ENCODE measurements at regions of chr6 and their contacts with region 1.

Region 1: GRCh38 chr6:68876792-68877493 is 241.9 kb downstream of the ADGRB3 start:
- DNase-seq: no peak
- ATAC-seq: no peak
- H3K4me3 ChIP-seq: no peak overlapping the region
- H3K27ac ChIP-seq: no peak overlapping the region
- H3K4me1 ChIP-seq: no peaks in the 10 kb centered on the region
- H3K27me3 ChIP-seq: no peaks in the 10 kb centered on the region; the same call in 1 of the 2 replicates
- CTCF ChIP-seq: peak; percentile 22; the same call in 1 of the 2 replicates

Region 2: DNA sequence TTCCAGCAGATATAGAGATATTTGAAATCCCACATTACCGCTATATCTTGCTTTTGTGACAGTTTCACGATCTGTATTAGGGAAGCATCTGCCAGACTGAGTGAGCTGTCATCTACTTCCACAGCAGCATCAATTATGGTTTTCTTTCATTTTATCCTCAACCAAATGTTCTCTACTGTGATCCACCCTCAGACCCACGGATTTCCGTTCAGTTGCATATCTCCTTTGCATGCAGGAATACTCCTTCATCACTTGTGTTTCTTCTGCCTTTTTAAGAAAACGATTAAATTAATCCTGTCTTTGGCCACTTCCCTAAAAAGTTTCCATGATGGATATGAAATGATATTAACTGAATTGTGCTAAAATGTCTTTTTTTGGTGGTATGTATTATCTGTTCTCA is 504.0 kb before region 1 on chr6:
- CTCF ChIA-PET with region 1: no interaction called
- POLR2A ChIA-PET with region 1: no interaction called
- in situ Hi-C with region 1: no loop called
- intact Hi-C with region 1: no loop called
- DNase-seq: no peak
- ATAC-seq: no peak
- H3K4me3 ChIP-seq: no peak overlapping the region
- H3K27ac ChIP-seq: no peak overlapping the region
- H3K4me1 ChIP-seq: no peaks in the 10 kb centered on the region
- H3K27me3 ChIP-seq: no peaks in the 10 kb centered on the region
- CTCF ChIP-seq: no peak

Region 3: GRCh38 chr6:68967549-68968300 is 90.8 kb after region 1 on chr6:
- CTCF ChIA-PET with region 1: no interaction called
- POLR2A ChIA-PET with region 1: no interaction called
- in situ Hi-C with region 1: no loop called
- intact Hi-C with region 1: loop called (anchors 5 kb)
- DNase-seq: peak; percentile 52
- ATAC-seq: peak; percentile 60; the same call in 1 of the 2 replicates
- H3K4me3 ChIP-seq: no peak overlapping the region
- H3K27ac ChIP-seq: no peak overlapping the region
- H3K4me1 ChIP-seq: no peaks in the 10 kb centered on the region
- H3K27me3 ChIP-seq: no peaks in the 10 kb centered on the region; the same call in none of the 2 replicates
- CTCF ChIP-seq: peak; percentile 96

Region 4: DNA sequence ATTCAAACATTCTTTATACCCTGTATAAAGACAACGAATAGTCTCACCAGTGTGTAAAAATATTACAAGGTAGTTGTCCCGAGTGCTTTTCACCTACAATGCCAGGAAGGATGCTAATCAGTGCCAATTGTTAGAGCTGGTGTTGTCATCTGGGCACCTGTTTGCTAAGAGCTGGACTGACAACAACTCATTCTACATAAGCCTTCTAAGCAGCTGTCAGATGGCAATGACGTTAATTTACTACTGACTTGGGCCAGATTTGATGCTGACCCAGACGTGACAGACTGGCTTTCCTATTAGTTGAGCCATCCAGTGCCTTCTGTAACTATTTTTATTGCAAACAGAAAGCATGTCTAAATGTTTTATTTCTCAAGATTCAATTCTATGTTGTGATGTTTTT is 113.4 kb after region 1 on chr6:
- CTCF ChIA-PET with region 1: no interaction called
- POLR2A ChIA-PET with region 1: no interaction called
- in situ Hi-C with region 1: no loop called
- intact Hi-C with region 1: no loop called
- DNase-seq: no peak
- ATAC-seq: no peak
- H3K4me3 ChIP-seq: no peak overlapping the region
- H3K27ac ChIP-seq: no peak overlapping the region
- H3K4me1 ChIP-seq: no peaks in the 10 kb centered on the region
- H3K27me3 ChIP-seq: no peaks in the 10 kb centered on the region
- CTCF ChIP-seq: no peak

Region 5: DNA sequence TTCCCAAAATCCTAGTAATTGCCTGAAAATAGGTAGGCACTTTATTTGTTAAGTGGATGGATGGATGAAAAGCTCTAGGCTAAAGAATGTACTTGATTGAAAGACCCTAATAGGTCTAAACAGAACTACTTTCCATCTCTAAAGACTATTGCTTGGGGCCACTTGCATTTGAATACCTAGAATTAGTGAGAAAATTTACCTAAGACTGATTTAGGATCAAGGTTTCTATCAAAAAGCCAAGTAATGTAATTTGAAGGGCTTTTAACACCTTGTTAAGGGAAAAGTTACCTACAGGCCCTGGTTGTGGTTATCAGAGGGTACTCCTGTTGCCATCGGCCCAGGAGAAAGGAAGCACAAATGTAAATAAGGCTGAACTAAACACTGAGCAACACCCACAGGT is 339.2 kb after region 1 on chr6:
- CTCF ChIA-PET with region 1: no interaction called
- POLR2A ChIA-PET with region 1: no interaction called
- in situ Hi-C with region 1: no loop called
- intact Hi-C with region 1: no loop called
- DNase-seq: no peak
- ATAC-seq: no peak
- H3K4me3 ChIP-seq: no peak overlapping the region
- H3K27ac ChIP-seq: no peak overlapping the region
- H3K4me1 ChIP-seq: no peaks in the 10 kb centered on the region
- H3K27me3 ChIP-seq: no peaks in the 10 kb centered on the region
- CTCF ChIP-seq: no peak

Region 6: DNA sequence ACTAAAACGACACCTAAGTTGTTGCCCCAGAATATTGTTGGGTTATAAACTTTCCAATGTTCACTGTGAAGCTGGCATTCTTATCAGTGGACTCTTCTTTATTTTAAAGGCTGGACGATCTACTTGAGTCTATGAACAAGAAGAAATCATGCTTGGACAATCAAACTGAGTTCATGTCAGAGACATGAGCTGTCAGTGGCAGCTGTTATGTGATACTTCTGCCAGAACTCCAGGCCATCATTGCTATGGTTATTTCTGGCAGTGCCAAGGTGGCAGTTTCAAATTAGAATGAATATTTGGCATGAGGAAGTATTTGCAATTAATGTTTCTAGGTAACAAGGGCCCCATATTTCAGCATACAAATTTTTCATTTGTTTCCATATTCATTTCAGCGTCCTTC is 502.6 kb after region 1 on chr6:
- CTCF ChIA-PET with region 1: no interaction called
- POLR2A ChIA-PET with region 1: no interaction called
- in situ Hi-C with region 1: no loop called
- intact Hi-C with region 1: no loop called
- DNase-seq: no peak
- ATAC-seq: no peak
- H3K4me3 ChIP-seq: no peak overlapping the region
- H3K27ac ChIP-seq: no peak overlapping the region
- H3K4me1 ChIP-seq: no peaks in the 10 kb centered on the region
- H3K27me3 ChIP-seq: no peaks in the 10 kb centered on the region
- CTCF ChIP-seq: no peak

Region 7: GRCh38 chr6:69732640-69733039 is 855.7 kb after region 1 on chr6:
- CTCF ChIA-PET with region 1: no interaction called
- POLR2A ChIA-PET with region 1: no interaction called
- in situ Hi-C with region 1: no loop called
- intact Hi-C with region 1: loop called (anchors 5 kb)
- DNase-seq: peak; percentile 13
- ATAC-seq: no peak
- H3K4me3 ChIP-seq: no peak overlapping the region
- H3K27ac ChIP-seq: no peak overlapping the region
- H3K4me1 ChIP-seq: no peaks in the 10 kb centered on the region
- H3K27me3 ChIP-seq: no peaks in the 10 kb centered on the region
- CTCF ChIP-seq: peak; percentile 29; the same call in 1 of the 2 replicates

Measured in Panc1 (cell line).